Naive thymus-derived CD4-positive, alpha-beta T cell (primary cell): ENCODE measurements at regions of chr10 and their contacts with region 1.

Region 1: GRCh38 chr10:43648398-43649184 is at the start of gene ZNF32:
- DNase-seq: peak; percentile 74 to 85 (median 80)
- ATAC-seq: peak; percentile 99
- H3K4me3 ChIP-seq: peak within 1 kb of the TSS; percentile 70
- H3K4me3 Mint-ChIP-seq: peak within 1 kb of the TSS; percentile 88 to 96 (median 95)
- H3K27ac ChIP-seq: peak within 1 kb of the TSS; percentile 94
- H3K27ac Mint-ChIP-seq: peak within 1 kb of the TSS; percentile 86 to 98 (median 94)
- H3K4me1 ChIP-seq: peaks cover 5% of the 10 kb centered on the region in 2 donors
- H3K4me1 Mint-ChIP-seq: peaks cover 8 to 31% (median 27%) of the 10 kb centered on the region in 7 donors
- H3K27me3 ChIP-seq: no peaks in the 10 kb centered on the region
- H3K27me3 Mint-ChIP-seq: peaks cover 0 to 5% (median 0%) of the 10 kb centered on the region in 5 donors
- total RNA-seq, gene ZNF32: 19.3 to 47.0 (median 22.7) TPM

Region 2: GRCh38 chr10:42552493-42553407 is 1095.8 kb before region 1 on chr10:
- CTCF ChIA-PET with region 1: no interaction called
- POLR2A ChIA-PET with region 1: no interaction called
- intact Hi-C with region 1: loop called (anchors 1 to 2 kb)
- DNase-seq: peak; percentile 83 to 92 (median 91)
- ATAC-seq: peak; percentile 98
- H3K4me3 ChIP-seq: peak overlapping the region; percentile 95
- H3K4me3 Mint-ChIP-seq: peak overlapping the region; percentile 96 to 100 (median 98)
- H3K27ac ChIP-seq: peak overlapping the region; percentile 87
- H3K27ac Mint-ChIP-seq: peak overlapping the region; percentile 86 to 98 (median 96)
- H3K4me1 ChIP-seq: peaks cover 0 to 16% of the 10 kb centered on the region in 2 donors
- H3K4me1 Mint-ChIP-seq: peaks cover 24 to 49% (median 45%) of the 10 kb centered on the region in 7 donors
- H3K27me3 ChIP-seq: no peaks in the 10 kb centered on the region
- H3K27me3 Mint-ChIP-seq: no peaks in the 10 kb centered on the region

Region 3: GRCh38 chr10:42782446-42783180 is 866.0 kb before region 1 on chr10 and contains the start of gene BMS1:
- CTCF ChIA-PET with region 1: no interaction called
- POLR2A ChIA-PET with region 1: no interaction called
- intact Hi-C with region 1: loop called in 1 of 2 experiments (anchors 1 kb)
- DNase-seq: peak; percentile 78 to 91 (median 86)
- ATAC-seq: peak; percentile 95
- H3K4me3 ChIP-seq: peak within 1 kb of the TSS; percentile 86
- H3K4me3 Mint-ChIP-seq: peak within 1 kb of the TSS; percentile 89 to 100 (median 96)
- H3K27ac ChIP-seq: peak within 1 kb of the TSS; percentile 83
- H3K27ac Mint-ChIP-seq: peak within 1 kb of the TSS; percentile 88 to 98 (median 94)
- H3K4me1 ChIP-seq: peaks cover 0 to 13% of the 10 kb centered on the region in 2 donors
- H3K4me1 Mint-ChIP-seq: peaks cover 10 to 60% (median 45%) of the 10 kb centered on the region in 7 donors
- H3K27me3 ChIP-seq: no peaks in the 10 kb centered on the region
- H3K27me3 Mint-ChIP-seq: peaks cover 0 to 3% (median 0%) of the 10 kb centered on the region in 5 donors
- total RNA-seq, gene BMS1: 9.7 to 20.0 (median 16.9) TPM

Region 4: GRCh38 chr10:43407576-43408330 is 240.8 kb before region 1 on chr10:
- CTCF ChIA-PET with region 1: no interaction called
- POLR2A ChIA-PET with region 1: no interaction called
- intact Hi-C with region 1: loop called in 1 of 2 experiments (anchors 2 kb)
- DNase-seq: peak; percentile 67 to 91 (median 79)
- ATAC-seq: peak; percentile 48
- H3K4me3 ChIP-seq: peak overlapping the region; percentile 99
- H3K4me3 Mint-ChIP-seq: peak overlapping the region; percentile 91 to 100 (median 98)
- H3K27ac ChIP-seq: peak overlapping the region; percentile 100
- H3K27ac Mint-ChIP-seq: peak overlapping the region; percentile 97 to 99 (median 98)
- H3K4me1 ChIP-seq: peaks cover 28 to 37% of the 10 kb centered on the region in 2 donors
- H3K4me1 Mint-ChIP-seq: peaks cover 31 to 50% (median 39%) of the 10 kb centered on the region in 7 donors
- H3K27me3 ChIP-seq: no peaks in the 10 kb centered on the region
- H3K27me3 Mint-ChIP-seq: peaks cover 0 to 2% (median 0%) of the 10 kb centered on the region in 5 donors

Region 5: GRCh38 chr10:43594944-43595589 is 53.5 kb before region 1 on chr10:
- CTCF ChIA-PET with region 1: no interaction called
- POLR2A ChIA-PET with region 1: interaction called, 12 read pairs
- intact Hi-C with region 1: no loop called
- DNase-seq: peak in 7 of 9 donors; percentile 18 to 44 (median 26)
- ATAC-seq: peak; percentile 76
- H3K4me3 ChIP-seq: peak overlapping the region; percentile 60
- H3K4me3 Mint-ChIP-seq: peak overlapping the region; percentile 58 to 92 (median 83)
- H3K27ac ChIP-seq: peak overlapping the region; percentile 26
- H3K27ac Mint-ChIP-seq: peak overlapping the region; percentile 62 to 92 (median 83)
- H3K4me1 ChIP-seq: peaks cover 23 to 24% of the 10 kb centered on the region in 2 donors
- H3K4me1 Mint-ChIP-seq: peaks cover 23 to 41% (median 27%) of the 10 kb centered on the region in 7 donors
- H3K27me3 ChIP-seq: no peaks in the 10 kb centered on the region
- H3K27me3 Mint-ChIP-seq: peaks cover 0 to 8% (median 0%) of the 10 kb centered on the region in 5 donors

Region 6: GRCh38 chr10:43623351-43623750 is 25.2 kb before region 1 on chr10:
- CTCF ChIA-PET with region 1: interaction called, 4 read pairs
- POLR2A ChIA-PET with region 1: interaction called, 3 read pairs
- intact Hi-C with region 1: loop called in 1 of 2 experiments (anchors 1 kb)
- DNase-seq: peak in 5 of 9 donors; percentile 21 to 45 (median 34)
- ATAC-seq: peak; percentile 40
- H3K4me3 ChIP-seq: peak overlapping the region; percentile 36
- H3K4me3 Mint-ChIP-seq: peak overlapping the region; percentile 67 to 95 (median 79)
- H3K27ac ChIP-seq: peak overlapping the region; percentile 34
- H3K27ac Mint-ChIP-seq: peak overlapping the region; percentile 45 to 91 (median 81)
- H3K4me1 ChIP-seq: no peaks in the 10 kb centered on the region
- H3K4me1 Mint-ChIP-seq: peaks cover 0 to 28% (median 18%) of the 10 kb centered on the region in 7 donors
- H3K27me3 ChIP-seq: no peaks in the 10 kb centered on the region
- H3K27me3 Mint-ChIP-seq: no peaks in the 10 kb centered on the region

Region 7: GRCh38 chr10:44959247-44960087 is 1310.9 kb after region 1 on chr10 and contains the start of gene RASSF4:
- CTCF ChIA-PET with region 1: no interaction called
- POLR2A ChIA-PET with region 1: no interaction called
- intact Hi-C with region 1: loop called in 1 of 2 experiments (anchors 1 kb)
- DNase-seq: peak; percentile 83 to 95 (median 89)
- ATAC-seq: peak; percentile 99
- H3K4me3 ChIP-seq: peak within 1 kb of the TSS; percentile 79
- H3K4me3 Mint-ChIP-seq: peak within 1 kb of the TSS; percentile 81 to 93 (median 88)
- H3K27ac ChIP-seq: peak within 1 kb of the TSS; percentile 68
- H3K27ac Mint-ChIP-seq: peak within 1 kb of the TSS; percentile 65 to 87 (median 80)
- H3K4me1 ChIP-seq: peaks cover 7 to 13% of the 10 kb centered on the region in 2 donors
- H3K4me1 Mint-ChIP-seq: peaks cover 16 to 52% (median 37%) of the 10 kb centered on the region in 7 donors
- H3K27me3 ChIP-seq: no peaks in the 10 kb centered on the region
- H3K27me3 Mint-ChIP-seq: no peaks in the 10 kb centered on the region
- total RNA-seq, gene RASSF4: 1.9 to 53.4 (median 3.0) TPM